Caco-2 (cell line): ENCODE measurements at regions of chr4 and their contacts with region 1.

Region 1: DNA sequence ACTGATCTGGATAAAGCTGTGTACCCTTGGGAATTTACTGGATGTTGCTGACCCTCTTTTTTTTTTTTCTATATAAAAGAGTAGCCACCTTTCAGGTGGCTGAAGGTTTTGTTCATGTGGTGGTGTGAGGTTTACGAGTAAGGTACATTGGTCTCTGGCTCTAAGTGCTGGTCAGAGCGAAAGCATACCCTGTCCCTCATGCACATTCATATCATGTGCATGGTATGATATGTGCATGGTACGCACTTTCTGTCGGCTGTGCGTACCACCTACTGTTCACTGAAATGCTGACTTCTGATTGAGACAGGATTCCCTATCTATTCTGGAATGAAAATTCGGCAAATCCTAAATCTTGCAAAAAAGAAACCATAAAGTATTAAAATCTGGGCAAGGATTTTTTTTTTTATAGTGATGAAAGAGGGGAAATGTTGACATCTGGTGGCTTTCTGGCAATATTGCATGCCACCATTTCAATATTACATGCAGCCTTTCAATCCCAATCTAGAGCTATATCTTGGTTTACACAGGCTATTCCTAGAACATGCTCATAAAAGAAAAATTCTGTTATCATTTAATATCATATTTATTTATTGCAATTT is 32.8 kb downstream of the FAM149A start:
- DNase-seq: no peak
- H3K4me3 ChIP-seq: no peak overlapping the region
- H3K4me3 Mint-ChIP-seq: no peak overlapping the region
- H3K27ac Mint-ChIP-seq: no peak overlapping the region
- H3K4me1 ChIP-seq: peaks cover 12% of the 10 kb centered on the region
- H3K4me1 Mint-ChIP-seq: peaks cover 12% of the 10 kb centered on the region
- H3K27me3 ChIP-seq: no peaks in the 10 kb centered on the region
- H3K27me3 Mint-ChIP-seq: no peaks in the 10 kb centered on the region
- CTCF ChIP-seq: peak; percentile 58 to 62

Region 2: DNA sequence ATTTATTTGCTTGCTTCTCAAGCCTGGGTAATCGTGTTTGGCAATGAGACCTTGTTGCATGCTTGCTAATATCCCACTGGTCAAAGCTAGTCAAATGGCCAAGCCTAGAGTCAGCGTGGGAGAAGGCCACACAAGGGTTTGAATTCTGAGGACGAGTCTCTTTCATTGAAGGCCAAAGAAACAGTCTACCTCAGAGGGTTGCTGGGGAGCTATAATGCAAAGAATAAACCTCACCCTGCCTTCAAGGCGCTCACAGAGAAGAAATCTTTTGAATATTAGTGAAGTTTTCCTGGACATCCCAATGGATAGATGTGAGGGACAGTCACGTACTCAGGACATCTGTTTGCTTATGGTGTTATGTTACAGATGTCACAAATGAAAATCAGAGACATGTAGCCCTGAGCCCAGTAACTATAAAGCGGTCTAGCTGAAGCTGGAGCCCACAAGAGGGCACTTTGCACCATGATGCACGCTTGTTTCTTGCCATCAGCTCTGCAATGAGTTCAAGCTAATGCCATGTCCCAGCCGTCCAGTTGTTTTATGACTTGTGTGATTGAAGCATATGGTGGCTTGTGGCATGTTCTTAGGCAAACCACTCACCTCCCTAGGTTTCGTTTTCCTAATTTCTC is 69.4 kb before region 1 on chr4:
- CTCF ChIA-PET with region 1: interaction called, 33 read pairs
- POLR2A ChIA-PET with region 1: no interaction called
- intact Hi-C with region 1: loop called (anchors 1 kb)
- DNase-seq: peak; percentile 49 to 55
- H3K4me3 ChIP-seq: no peak overlapping the region
- H3K4me3 Mint-ChIP-seq: no peak overlapping the region
- H3K27ac Mint-ChIP-seq: no peak overlapping the region
- H3K4me1 ChIP-seq: no peaks in the 10 kb centered on the region
- H3K4me1 Mint-ChIP-seq: peaks cover 11% of the 10 kb centered on the region
- H3K27me3 ChIP-seq: no peaks in the 10 kb centered on the region
- H3K27me3 Mint-ChIP-seq: no peaks in the 10 kb centered on the region
- CTCF ChIP-seq: peak; percentile 34 to 52

Region 3: GRCh38 chr4:186078980-186079695 is 58.2 kb before region 1 on chr4:
- CTCF ChIA-PET with region 1: interaction called, 13 read pairs
- POLR2A ChIA-PET with region 1: no interaction called
- intact Hi-C with region 1: loop called (anchors 2 kb)
- DNase-seq: peak; percentile 19 to 49
- H3K4me3 ChIP-seq: no peak overlapping the region
- H3K4me3 Mint-ChIP-seq: peak overlapping the region; percentile 16
- H3K27ac Mint-ChIP-seq: no peak overlapping the region
- H3K4me1 ChIP-seq: peaks cover 6% of the 10 kb centered on the region; the same call in 1 of the 2 replicates
- H3K4me1 Mint-ChIP-seq: peaks cover 16% of the 10 kb centered on the region
- H3K27me3 ChIP-seq: no peaks in the 10 kb centered on the region
- H3K27me3 Mint-ChIP-seq: peaks cover 2% of the 10 kb centered on the region
- CTCF ChIP-seq: no peak

Region 4: GRCh38 chr4:186104114-186104889 is 33.0 kb before region 1 on chr4 and contains the start of gene FAM149A:
- CTCF ChIA-PET with region 1: interaction called, 4 read pairs
- POLR2A ChIA-PET with region 1: no interaction called
- intact Hi-C with region 1: loop called (anchors 2 kb)
- DNase-seq: peak; percentile 69 to 79
- H3K4me3 ChIP-seq: peak within 1 kb of the TSS; percentile 67
- H3K4me3 Mint-ChIP-seq: peak within 1 kb of the TSS; percentile 60
- H3K27ac Mint-ChIP-seq: peak within 1 kb of the TSS; percentile 82
- H3K4me1 ChIP-seq: 0 out of 2 replicates have a peak, but pooled peaks cover 4% of the 10 kb centered on the region
- H3K4me1 Mint-ChIP-seq: no peaks in the 10 kb centered on the region
- H3K27me3 ChIP-seq: no peaks in the 10 kb centered on the region
- H3K27me3 Mint-ChIP-seq: no peaks in the 10 kb centered on the region
- CTCF ChIP-seq: no peak
- total RNA-seq, gene FAM149A: 5.1 and 6.6 TPM in 2 replicates